Left cardiac atrium (tissue), 4 donors: ENCODE measurements at regions of chr13 and their contacts with region 1.

Region 1: GRCh38 chr13:44050450-44051063 is 170.9 kb downstream of the LACC1 start:
- DNase-seq: no peak
- ATAC-seq: no peak

Region 2: DNA sequence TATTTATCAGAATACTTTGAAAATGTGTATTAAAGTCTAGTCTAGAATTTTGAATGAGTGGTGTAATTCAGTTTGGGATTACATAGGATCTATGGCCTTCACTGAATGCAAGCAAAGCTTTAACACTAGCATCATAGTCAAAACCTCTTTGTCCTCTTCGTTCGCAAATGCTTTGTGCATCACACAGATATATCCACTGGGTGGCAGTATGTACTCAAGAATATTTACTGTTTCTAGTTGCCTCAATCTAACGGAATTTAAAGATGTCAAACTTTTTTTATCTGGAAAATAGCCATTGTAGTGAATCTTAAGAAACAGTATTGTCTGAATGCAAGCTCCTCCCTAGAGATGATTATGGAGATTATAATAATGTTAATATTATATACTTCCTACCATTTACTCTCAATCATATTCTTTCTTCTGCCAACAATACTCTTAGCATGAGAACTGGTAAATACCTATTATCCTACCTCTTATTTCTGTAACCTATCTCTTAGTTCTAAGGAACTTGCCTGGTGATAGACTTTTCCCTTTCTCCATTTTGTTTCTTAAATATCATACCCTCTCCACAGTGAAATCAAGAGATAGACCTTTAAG is 145.0 kb before region 1 on chr13:
- intact Hi-C with region 1: loop called (anchors 5 to 10 kb)
- DNase-seq: no peak
- ATAC-seq: peak; percentile 53 to 70

Region 3: GRCh38 chr13:43915451-43915850 is 135.1 kb before region 1 on chr13:
- intact Hi-C with region 1: loop called in 1 of 2 experiments (anchors 10 kb)
- DNase-seq: no peak
- ATAC-seq: no peak

Region 4: DNA sequence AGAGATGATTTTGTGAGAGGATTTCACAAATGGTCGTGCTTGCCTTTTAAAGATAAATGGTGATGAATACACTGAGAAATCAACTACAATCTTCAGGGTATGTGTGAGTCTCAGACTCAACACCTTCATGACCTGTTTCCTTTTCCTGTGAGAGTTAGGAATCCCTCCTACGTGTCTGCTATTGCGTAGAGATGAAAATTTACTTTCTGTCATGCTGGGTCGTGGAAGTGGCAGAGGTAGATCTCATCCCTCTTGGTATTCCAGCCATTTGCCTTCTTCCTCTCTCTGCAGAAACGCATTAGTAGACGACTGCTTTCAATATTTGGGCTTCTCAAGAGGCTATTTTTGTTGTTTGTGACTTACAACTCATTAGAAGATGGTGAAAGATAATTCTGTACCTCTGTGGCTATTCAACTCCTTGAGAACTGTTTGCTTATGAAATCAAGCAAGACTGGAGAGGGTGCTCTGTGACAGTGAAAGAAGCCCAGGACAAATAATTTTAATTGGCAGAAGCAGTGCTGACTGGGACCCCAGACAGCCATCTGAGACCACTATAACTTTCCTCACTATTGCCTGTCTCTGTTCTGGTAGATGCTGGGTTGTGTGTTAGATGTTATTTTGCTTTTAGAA is 62.3 kb after region 1 on chr13:
- intact Hi-C with region 1: loop called in 1 of 2 experiments (anchors 1 kb)
- DNase-seq: no peak
- ATAC-seq: no peak